Activated T-helper 1 cell treated with anti-CD3 and anti-CD28 coated beads, Interleukin-12 subunit alpha, Interleukin-12 subunit beta, Interleukin-2, Interleukin-4 antibody, amounts not matched to agents 30 ng/mL and 10 ng/mL and 1 ng/mL, durations not matched to agents 14 hours and 24 hours and 36 hours (primary cell): ENCODE measurements at regions of chr3 and their contacts with region 1.

Region 1: DNA sequence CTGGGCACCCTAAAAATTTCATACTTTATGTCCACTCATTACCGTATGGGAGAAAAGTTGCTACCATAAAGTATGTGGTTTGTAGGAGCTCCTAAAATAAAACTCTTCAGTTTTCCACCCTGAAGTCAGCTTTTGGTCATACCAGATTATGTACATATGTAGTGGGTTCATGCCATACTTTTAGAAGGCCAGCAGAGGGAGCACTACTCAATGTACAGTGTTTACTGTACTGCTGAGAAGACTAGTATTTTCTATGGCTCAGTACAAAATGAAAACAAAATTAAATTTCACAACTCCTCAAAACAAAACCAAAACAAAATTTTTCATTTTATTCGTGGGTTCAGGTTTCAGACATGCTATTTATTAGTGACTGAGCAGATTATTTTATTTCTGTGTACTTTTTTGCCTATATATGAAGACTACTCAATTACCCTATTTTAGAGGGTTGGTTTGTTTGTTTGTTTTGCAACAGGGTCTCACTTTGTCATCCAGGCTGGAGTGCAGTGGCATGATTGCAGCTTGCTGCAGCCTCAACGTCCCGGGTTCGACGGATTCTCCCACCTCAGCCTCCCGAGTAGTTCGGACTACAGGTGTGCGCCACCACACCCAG is 24.3 kb downstream of the NXPE3 start:
- DNase-seq: peak; percentile 48
- H3K4me3 Mint-ChIP-seq: no peak overlapping the region
- H3K27ac Mint-ChIP-seq: no peak overlapping the region
- H3K4me1 Mint-ChIP-seq: peaks cover 22% of the 10 kb centered on the region
- H3K27me3 Mint-ChIP-seq: no peaks in the 10 kb centered on the region

Region 2: DNA sequence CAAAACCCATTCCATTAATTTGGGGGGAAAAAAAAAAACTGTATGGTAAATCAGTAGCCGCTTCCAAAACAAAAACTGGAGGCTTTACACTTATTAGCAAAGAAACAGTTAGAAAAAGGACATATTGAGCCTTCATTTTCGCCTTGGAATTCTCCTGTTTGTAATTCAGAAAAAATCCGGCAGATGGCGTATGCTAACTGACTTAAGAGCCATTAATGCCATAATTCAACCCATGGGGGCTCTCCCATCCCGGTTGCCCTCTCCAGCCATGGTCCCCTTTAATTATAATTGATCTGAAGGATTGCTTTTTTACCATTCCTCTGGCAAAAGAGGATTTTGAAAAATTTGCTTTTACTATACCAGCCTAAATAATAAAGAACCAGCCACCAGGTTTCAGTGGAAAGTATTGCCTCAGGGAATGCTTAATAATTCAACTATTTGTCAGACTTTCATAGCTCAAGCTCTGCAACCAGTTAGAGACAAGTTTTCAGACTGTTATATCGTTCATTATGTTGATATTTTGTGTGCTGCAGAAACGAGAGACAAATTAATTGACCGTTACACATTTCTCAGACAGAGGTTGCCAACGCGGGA is 107.4 kb before region 1 on chr3:
- intact Hi-C with region 1: loop called (anchors 1 kb)
- DNase-seq: no peak
- H3K4me3 Mint-ChIP-seq: no peak overlapping the region
- H3K27ac Mint-ChIP-seq: no peak overlapping the region
- H3K4me1 Mint-ChIP-seq: no peaks in the 10 kb centered on the region
- H3K27me3 Mint-ChIP-seq: no peaks in the 10 kb centered on the region

Region 3: GRCh38 chr3:102374863-102375634 is 571.8 kb after region 1 on chr3:
- intact Hi-C with region 1: loop called (anchors 10 kb)
- DNase-seq: no peak
- H3K4me3 Mint-ChIP-seq: no peak overlapping the region
- H3K27ac Mint-ChIP-seq: no peak overlapping the region
- H3K4me1 Mint-ChIP-seq: no peaks in the 10 kb centered on the region
- H3K27me3 Mint-ChIP-seq: no peaks in the 10 kb centered on the region

Region 4: DNA sequence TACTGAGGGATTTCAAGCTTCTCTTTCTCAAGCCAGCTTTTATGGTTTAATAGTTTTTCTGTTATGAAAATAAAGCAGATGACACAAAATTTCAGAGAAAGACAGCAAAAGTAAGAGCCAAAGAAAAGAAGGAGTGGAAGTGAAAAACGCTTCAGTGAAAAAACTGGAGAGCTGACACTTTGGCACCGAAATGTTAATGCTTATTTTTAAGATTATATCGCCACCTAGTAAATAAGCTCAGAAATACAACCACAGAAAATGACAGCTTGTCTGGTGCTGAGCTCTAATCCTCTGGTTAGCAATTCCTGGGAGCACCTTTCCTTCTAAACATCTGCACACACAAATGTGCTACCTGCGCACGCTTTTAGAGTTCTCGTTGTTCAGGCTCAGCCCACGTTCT is 733.2 kb after region 1 on chr3:
- intact Hi-C with region 1: loop called (anchors 2 kb)
- DNase-seq: no peak
- H3K4me3 Mint-ChIP-seq: no peak overlapping the region
- H3K27ac Mint-ChIP-seq: no peak overlapping the region
- H3K4me1 Mint-ChIP-seq: no peaks in the 10 kb centered on the region
- H3K27me3 Mint-ChIP-seq: peaks cover 9% of the 10 kb centered on the region